Left ventricle myocardium inferior (tissue), 1 donor: ENCODE measurements at regions of chr15 and their contacts with region 1.

Region 1: GRCh38 chr15:42800731-42801474 is 64.0 kb upstream of the CDAN1 start:
- DNase-seq: no peak
- H3K4me3 ChIP-seq: no peak overlapping the region
- H3K27ac ChIP-seq: no peak overlapping the region
- H3K4me1 ChIP-seq: peaks cover 6% of the 10 kb centered on the region
- H3K27me3 ChIP-seq: no peaks in the 10 kb centered on the region
- CTCF ChIP-seq: peak; percentile 27

Region 2: DNA sequence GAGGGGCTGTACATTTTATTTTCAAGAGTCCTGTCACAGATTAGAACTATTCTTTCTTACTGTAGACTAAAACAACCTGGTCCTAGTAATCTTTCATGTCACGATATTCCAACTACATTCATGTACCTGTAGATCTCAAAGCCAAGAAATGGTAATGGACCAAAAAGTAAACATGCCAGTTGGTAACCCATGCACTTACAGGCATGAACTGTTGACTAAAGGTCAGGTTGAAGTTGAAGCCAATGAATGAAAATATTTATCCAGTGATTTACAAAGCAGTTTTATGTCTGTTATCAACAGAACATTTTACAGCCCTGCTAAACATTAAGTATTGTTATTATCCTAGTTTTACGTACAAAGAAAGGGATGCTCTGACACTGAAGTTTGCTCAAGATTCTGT is 277.6 kb before region 1 on chr15:
- intact Hi-C with region 1: no loop called
- DNase-seq: no peak
- H3K4me3 ChIP-seq: no peak overlapping the region
- H3K27ac ChIP-seq: no peak overlapping the region
- H3K4me1 ChIP-seq: no peaks in the 10 kb centered on the region
- H3K27me3 ChIP-seq: no peaks in the 10 kb centered on the region
- CTCF ChIP-seq: no peak

Region 3: DNA sequence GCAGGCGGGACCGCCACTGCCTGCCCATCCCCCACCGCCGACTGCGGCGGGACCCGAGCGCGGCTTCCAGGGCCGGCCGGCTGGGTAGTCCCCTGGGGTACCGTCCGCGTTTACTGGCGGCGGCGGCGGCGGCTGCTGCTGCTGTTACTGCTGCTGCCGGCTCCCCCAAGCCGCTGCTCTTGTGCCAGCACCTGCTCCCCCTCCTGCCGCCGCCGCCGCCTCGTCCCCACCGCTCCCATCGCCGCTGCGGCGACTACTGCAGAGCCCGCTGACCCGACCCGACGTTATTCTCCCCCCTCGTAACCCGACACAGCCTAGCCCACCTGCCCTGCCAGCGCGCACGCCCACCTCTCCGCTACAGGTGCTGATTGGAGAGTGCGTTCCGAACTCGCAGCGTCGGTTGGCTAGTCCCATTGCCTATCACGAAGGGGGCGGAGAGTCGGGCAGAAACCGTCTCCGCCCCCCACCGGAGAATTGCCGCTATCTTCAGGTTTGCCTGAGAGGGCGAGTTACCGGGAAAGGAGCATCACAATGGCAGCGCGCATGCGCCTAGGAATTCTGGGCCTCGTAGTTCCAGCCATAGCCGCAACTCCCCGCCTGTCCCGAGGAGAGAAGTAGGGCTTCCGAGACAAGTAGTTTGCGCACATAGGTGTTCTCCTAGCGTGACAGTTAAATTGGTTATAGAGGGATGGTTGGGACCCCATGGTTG is 119.8 kb after region 1 on chr15 and contains the start of gene TTBK2:
- intact Hi-C with region 1: loop called (anchors 10 kb)
- DNase-seq: peak; percentile 99
- H3K4me3 ChIP-seq: peak within 1 kb of the TSS; percentile 89
- H3K27ac ChIP-seq: peak within 1 kb of the TSS; percentile 87
- H3K4me1 ChIP-seq: peaks cover 36% of the 10 kb centered on the region
- H3K27me3 ChIP-seq: no peaks in the 10 kb centered on the region
- CTCF ChIP-seq: peak; percentile 38
- total RNA-seq, gene TTBK2: 23.3 TPM